ENCODE measurements at regions of chr1 and their contacts with region 1.

Region 1: DNA sequence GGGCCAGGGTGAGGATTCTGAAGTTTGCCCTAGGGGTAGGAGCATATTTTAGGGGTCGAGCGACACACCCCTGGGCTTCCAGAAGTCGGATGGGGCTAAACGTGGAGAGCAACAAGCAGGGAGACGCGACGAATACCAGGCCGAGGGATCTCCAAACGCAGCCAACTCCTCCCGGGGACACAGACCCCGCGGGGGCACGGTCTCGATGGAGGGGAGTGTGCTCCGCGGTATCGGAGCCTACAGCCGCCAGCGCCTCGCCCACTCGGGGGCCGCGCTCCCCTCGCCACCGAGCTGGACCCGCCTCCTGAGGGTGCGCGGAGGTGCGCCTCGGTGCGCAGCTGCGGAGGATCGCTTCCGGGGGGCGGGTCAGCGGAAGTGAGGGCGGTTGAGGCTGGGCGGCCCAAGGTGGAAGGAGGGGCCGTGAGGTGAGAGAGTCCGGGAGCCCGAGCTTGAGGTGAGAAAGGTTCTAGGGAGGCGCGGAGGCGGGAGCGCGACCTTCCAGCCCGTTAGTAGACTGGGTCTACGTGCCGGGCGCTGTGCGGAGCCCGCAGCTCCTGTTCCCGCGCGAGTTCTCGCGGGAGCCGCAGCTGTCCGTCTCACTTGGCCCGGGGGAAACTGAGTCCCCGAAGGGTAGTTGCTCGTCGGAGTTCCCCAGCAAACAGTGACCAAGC is at the start of gene MTFR1L:
- DNase-seq: peak; percentile 88
- H3K4me3 Mint-ChIP-seq: peak within 1 kb of the TSS; percentile 79
- H3K27ac Mint-ChIP-seq: peak within 1 kb of the TSS; percentile 89
- H3K4me1 Mint-ChIP-seq: peaks cover 33% of the 10 kb centered on the region
- H3K27me3 Mint-ChIP-seq: no peaks in the 10 kb centered on the region
- CTCF ChIP-seq: no peak
- total RNA-seq, gene MTFR1L: 39.3 and 42.2 TPM in 2 replicates

Region 2: DNA sequence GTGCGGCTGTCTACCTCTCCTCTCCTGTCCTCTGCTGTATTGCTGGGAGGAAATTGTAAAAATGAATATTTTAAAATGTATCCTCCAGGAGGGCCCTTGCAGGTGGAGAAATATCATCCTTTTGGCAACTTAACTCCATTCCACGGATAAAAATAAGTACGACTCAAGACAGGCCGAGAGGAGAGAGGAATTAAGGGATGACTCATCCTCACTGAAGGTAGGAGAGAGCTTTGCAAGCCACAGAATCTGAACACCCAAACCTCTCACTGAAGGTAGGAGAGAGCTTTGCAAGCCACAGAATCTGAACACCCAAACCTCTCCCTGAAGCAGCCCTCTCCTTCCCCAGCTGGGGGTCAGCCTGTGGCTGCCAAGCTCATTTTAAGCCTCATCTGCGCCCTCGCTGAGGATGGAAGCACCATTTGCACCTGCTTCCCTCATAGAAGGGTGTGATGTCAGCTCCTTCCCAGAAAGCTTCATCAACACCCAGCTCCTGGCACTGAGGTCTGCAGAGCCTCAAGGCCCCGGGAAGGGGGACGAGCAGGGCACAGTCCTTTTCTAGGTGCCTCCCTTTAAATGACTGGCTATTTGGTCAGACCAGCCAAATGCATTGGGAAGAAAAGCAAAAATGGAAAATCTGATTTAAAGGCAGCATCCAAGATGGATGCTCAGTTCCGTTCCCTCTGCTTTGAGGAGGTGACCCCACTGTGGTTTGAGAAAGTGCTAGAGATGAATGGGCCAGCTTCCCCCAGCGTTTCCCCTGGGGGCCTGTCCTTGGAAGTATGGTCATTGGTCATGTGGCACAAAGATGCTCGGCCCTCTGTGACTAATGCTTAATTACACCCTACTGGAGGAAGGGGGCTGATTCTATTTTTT is 32.6 kb before region 1 on chr1:
- CTCF ChIA-PET with region 1: no interaction called
- POLR2A ChIA-PET with region 1: no interaction called
- intact Hi-C with region 1: no loop called
- DNase-seq: no peak
- H3K4me3 Mint-ChIP-seq: no peak overlapping the region
- H3K27ac Mint-ChIP-seq: no peak overlapping the region
- H3K4me1 Mint-ChIP-seq: no peaks in the 10 kb centered on the region
- H3K27me3 Mint-ChIP-seq: no peaks in the 10 kb centered on the region
- CTCF ChIP-seq: no peak

Region 3: DNA sequence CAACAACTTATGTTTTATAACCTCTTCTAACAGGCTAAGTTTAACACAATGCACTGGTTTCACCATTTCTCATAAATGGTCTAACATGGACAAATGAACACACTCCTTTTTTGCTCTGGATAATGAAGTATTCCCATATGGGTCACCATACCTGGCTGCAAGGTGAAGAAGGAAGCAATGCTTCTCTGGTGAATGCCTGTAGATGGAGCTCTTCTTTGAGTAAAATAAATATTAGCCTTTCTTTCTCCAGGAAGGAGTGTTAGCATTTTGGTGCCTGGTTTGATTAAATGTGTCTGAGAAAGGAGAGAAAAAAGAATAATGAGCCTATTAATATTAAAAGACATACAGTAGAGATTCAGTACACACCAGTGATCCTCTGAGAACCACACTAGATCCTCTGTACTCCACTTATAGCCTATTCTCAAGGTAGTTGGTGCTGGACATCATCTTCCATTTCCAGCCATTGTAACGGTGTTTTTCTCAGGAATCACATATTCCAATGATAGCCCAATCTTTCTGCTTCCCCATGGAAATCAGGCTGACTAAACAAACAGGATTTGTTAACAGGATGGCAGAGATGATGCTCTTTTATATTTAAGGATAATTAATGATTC is 17.7 kb after region 1 on chr1:
- CTCF ChIA-PET with region 1: interaction called, 5 read pairs
- POLR2A ChIA-PET with region 1: interaction called, 46 read pairs
- intact Hi-C with region 1: no loop called
- DNase-seq: peak; percentile 44
- H3K4me3 Mint-ChIP-seq: no peak overlapping the region
- H3K27ac Mint-ChIP-seq: no peak overlapping the region
- H3K4me1 Mint-ChIP-seq: peaks cover 12% of the 10 kb centered on the region
- H3K27me3 Mint-ChIP-seq: no peaks in the 10 kb centered on the region
- CTCF ChIP-seq: peak; percentile 45

Region 4: GRCh38 chr1:25858906-25859789 is 39.4 kb after region 1 on chr1 and contains the start of gene AUNIP:
- CTCF ChIA-PET with region 1: no interaction called
- POLR2A ChIA-PET with region 1: interaction called, 7 read pairs
- intact Hi-C with region 1: loop called (anchors 2 kb)
- DNase-seq: peak; percentile 86
- H3K4me3 Mint-ChIP-seq: peak within 1 kb of the TSS; percentile 97
- H3K27ac Mint-ChIP-seq: peak within 1 kb of the TSS; percentile 93
- H3K4me1 Mint-ChIP-seq: peaks cover 23% of the 10 kb centered on the region
- H3K27me3 Mint-ChIP-seq: no peaks in the 10 kb centered on the region
- CTCF ChIP-seq: no peak
- total RNA-seq, gene AUNIP: 5.2 and 9.4 TPM in 2 replicates

Region 5: DNA sequence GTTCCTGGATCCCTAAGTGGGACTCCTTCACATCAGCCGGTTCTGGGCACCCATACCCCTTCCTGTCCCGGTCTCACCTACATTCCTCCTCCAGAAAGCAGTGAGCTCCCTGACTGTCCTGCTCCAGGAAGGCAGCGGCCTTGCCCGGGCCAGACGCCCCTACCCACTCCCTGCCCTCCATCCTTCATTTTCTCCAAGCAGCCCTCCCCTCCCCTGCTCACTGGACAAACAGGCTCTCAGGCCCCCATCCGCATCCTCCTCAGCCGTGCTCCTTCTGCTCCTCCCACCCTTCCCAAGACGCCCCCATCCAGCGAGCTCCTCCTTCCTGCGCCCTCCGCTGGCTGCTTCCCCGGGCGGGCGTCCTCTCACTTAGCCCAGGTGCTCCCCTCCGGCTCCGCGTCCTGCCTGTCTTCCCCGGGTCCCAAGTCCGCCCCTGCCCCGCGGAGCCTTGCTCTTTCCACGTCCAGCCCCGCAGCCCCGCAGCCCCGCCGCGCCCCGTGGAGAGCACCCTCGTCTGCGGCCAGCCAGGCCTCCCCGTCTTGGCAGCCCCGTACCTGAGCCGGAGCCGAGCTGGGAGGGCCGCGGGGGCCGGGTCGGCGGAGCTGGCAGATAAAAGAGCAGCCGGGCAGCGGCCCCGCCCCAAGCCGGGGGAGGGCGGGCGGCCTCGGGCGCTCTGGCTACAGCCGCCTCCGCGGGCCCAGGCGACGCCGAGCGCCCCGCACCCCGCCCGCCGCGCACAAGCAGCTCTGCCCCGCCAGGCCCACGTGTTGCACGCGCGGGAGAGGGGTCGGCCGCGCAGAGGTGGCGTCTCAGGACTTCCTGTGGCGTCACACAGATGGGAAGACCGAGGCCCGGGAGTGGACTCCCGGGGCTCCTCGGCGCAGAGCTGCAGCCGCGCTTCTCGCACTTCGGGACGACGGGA is 55.5 kb after region 1 on chr1 and contains the start of gene PAQR7:
- CTCF ChIA-PET with region 1: no interaction called
- POLR2A ChIA-PET with region 1: interaction called, 15 read pairs
- intact Hi-C with region 1: loop called (anchors 5 kb)
- DNase-seq: peak; percentile 57
- H3K4me3 Mint-ChIP-seq: peak within 1 kb of the TSS; percentile 81
- H3K27ac Mint-ChIP-seq: peak within 1 kb of the TSS; percentile 54
- H3K4me1 Mint-ChIP-seq: peaks cover 15% of the 10 kb centered on the region
- H3K27me3 Mint-ChIP-seq: no peaks in the 10 kb centered on the region
- CTCF ChIP-seq: no peak
- total RNA-seq, gene PAQR7: 3.8 and 4.4 TPM in 2 replicates

Region 6: DNA sequence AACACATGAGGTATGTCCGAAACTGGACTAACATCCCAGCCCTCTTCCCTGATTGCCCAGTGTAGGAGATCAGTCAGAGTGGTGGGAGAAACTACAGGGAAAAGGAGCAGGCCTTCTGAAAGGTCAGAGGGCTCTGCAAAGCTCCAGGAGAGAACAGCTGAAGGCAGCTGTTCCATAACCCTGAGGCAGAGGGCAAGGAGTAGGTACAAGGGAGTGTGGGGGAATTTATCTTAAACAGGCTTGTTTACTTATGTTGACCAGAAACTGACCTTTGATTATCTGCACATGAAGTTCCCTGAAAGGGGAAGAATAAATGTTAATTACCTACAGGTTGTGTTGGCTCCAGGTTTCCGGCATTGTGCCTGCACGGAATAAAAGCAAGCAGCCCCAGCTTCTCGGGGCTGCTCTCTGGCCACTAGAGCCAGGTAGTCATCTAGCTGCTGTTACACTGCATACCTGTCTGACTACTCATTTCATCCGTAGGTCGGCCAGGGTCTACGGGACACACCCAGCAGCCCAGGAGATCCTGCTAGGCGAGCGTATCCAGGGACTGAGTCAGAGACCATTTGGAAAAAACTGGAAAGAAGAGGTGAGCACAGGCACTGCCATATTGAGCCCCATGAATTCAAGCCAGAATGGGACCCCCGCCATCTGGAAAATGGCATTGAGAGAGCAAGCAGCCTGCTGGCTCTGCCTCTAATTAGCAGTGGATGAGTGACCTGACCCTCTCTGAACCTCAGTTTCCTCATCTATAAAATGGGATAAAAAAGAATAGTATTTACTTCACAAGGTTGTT is 70.7 kb after region 1 on chr1:
- CTCF ChIA-PET with region 1: interaction called, 5 read pairs
- POLR2A ChIA-PET with region 1: interaction called, 33 read pairs
- intact Hi-C with region 1: loop called (anchors 1 kb)
- DNase-seq: peak; percentile 92
- H3K4me3 Mint-ChIP-seq: no peak overlapping the region
- H3K27ac Mint-ChIP-seq: peak overlapping the region; percentile 85
- H3K4me1 Mint-ChIP-seq: peaks cover 17% of the 10 kb centered on the region
- H3K27me3 Mint-ChIP-seq: no peaks in the 10 kb centered on the region
- CTCF ChIP-seq: no peak

Region 7: GRCh38 chr1:25904943-25905679 is 85.4 kb after region 1 on chr1:
- CTCF ChIA-PET with region 1: interaction called, 3 read pairs
- POLR2A ChIA-PET with region 1: interaction called, 22 read pairs
- intact Hi-C with region 1: no loop called
- DNase-seq: peak; percentile 91
- H3K4me3 Mint-ChIP-seq: peak overlapping the region; percentile 91
- H3K27ac Mint-ChIP-seq: peak overlapping the region; percentile 93
- H3K4me1 Mint-ChIP-seq: peaks cover 6% of the 10 kb centered on the region
- H3K27me3 Mint-ChIP-seq: no peaks in the 10 kb centered on the region
- CTCF ChIP-seq: no peak

Region 8: DNA sequence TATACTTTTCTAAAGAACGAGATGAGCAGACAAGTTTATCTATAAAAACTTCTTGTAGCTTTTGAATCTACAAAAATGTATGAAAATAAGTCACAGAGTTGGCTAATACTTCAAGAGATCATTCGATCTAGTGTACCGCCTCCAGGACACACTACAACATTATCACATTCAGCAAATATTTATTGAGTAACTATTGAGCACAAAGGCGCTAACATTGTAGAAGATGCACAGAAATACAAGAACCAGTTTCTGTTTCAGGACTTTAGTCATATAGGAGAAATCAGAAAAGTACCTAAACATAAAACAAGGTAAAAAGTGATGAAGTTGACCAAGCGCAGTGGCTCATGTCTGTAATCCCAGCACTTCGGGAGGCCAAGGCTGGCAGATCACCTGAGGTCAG is 1649.6 kb after region 1 on chr1:
- CTCF ChIA-PET with region 1: no interaction called
- POLR2A ChIA-PET with region 1: no interaction called
- intact Hi-C with region 1: no loop called
- DNase-seq: no peak
- H3K4me3 Mint-ChIP-seq: no peak overlapping the region
- H3K27ac Mint-ChIP-seq: no peak overlapping the region
- H3K4me1 Mint-ChIP-seq: peaks cover 18% of the 10 kb centered on the region
- H3K27me3 Mint-ChIP-seq: no peaks in the 10 kb centered on the region
- CTCF ChIP-seq: no peak

Measured in MCF 10A (cell line).